GM13976 (cell line): ENCODE measurements at regions of chr5 and their contacts with region 1.

Region 1: DNA sequence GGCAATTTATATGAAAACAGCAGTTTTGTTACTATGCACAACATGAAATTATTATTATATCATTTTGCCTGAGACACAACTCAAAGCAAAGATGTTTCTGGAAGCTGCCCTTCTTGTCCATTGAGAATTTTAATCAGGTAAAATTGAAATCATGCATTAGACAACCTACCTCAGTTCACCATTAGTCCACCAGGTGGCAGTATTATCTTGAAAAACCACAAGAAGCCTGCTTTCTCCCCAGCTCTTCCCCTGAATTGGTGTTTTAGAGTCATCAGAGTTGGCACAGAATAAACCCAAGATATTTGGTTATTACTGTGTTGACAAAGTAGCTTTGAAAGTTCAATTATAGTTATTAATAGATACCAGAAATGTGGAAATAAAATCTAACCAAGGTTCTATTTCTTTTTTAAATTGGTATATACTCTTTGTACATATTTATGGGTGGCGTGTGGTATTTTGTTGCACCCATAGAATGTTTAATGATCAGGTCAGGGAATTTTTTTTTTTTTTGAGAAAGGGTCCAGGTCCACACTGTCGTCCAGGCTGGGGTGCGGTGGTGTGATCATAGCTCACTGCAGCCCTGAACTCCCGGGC is 25.7 kb downstream of the UTP15 start:
- DNase-seq: peak; percentile 36
- CTCF ChIP-seq: peak; percentile 58

Region 2: DNA sequence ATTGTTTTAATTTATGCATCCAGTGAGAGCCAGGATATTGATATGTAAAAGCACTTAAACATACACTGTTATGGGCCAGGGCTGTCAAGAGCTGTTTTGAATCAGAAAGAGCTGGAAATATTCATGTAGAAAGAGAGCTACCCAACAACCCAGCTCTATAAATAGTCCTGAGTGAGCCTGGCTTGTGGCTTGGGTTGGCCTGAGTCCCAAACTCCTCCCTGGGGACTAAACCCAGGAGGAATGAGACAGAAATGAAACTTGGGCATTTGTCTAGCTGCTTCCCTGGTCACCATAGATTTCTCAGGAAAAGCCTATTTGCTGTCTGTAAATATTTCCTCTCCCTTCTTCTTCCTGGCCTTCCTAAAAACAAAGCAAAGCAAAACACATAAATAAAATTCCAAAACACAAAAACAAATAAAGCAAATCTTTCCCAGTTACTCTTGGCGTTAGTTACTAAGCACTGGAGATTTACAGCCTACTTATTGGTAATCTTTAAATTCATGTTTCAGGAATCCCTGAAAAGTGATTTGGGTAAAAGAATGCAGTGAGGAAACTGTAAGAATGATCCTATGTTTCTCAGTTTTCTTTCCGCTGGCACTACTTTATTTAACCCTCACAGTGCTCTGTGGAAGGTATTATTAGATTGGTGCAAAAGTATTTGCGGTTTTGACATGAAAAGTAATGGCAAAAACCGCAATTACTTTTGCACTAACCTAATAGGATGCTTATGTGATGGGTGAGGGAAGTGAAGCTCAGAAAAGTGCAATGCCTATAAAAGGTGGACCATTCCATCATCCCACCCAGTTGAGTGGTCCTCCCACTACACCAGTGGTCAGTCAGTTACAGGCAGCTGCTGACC is 1760.3 kb before region 1 on chr5:
- in situ Hi-C with region 1: no loop called
- DNase-seq: no peak
- CTCF ChIP-seq: no peak

Region 3: GRCh38 chr5:73792687-73793320 is 201.6 kb after region 1 on chr5:
- in situ Hi-C with region 1: loop called (anchors 5 kb)
- DNase-seq: peak; percentile 57
- CTCF ChIP-seq: peak; percentile 91

Region 4: DNA sequence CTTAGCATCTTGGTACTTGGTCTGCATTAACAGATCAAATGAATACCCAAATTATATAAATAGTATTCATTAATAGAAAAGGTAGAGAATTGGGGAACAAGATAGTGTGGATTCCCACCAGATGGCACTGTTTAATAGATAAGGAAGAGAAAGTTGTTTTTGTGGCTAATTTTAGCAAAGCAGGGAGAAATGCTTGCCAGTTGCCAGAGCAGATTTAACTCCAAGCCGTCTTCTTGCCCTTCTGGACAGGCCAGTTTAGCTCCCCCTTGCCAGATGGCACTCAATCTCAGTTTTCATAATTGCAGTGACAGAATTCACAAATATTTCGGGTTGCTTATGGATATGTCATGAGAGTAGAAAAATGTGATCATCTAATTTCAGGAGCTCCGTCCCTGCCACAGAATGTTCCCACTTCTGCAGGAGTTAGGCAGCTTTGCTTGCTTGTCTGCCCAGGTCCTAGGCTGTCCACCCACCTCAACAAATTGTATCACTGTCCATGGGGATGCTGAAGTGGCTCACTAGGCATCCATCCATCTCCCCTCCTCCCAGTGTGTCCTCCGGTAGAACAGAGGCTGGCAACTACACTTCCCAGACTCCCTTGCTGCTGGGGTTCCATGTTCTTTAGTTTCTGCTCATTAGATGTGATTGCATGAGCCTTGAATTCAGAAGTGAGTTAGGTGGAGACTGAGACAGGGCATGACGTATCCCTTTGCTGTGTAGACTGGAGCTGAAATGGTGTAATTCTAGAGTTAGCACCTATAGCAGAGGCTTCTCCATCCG is 1082.0 kb after region 1 on chr5:
- in situ Hi-C with region 1: loop called (anchors 25 kb)
- DNase-seq: no peak
- CTCF ChIP-seq: no peak